Caco-2 (cell line): ENCODE measurements at regions of chr2 and their contacts with region 1.

Region 1: GRCh38 chr2:231621129-231621879 is 28.6 kb downstream of the TEX44 start:
- DNase-seq: peak; percentile 79 to 92
- H3K4me3 ChIP-seq: no peak overlapping the region
- H3K4me3 Mint-ChIP-seq: peak overlapping the region; percentile 58
- H3K27ac Mint-ChIP-seq: peak overlapping the region; percentile 88
- H3K4me1 ChIP-seq: peaks cover 37% of the 10 kb centered on the region
- H3K4me1 Mint-ChIP-seq: peaks cover 30% of the 10 kb centered on the region
- H3K27me3 ChIP-seq: no peaks in the 10 kb centered on the region
- H3K27me3 Mint-ChIP-seq: no peaks in the 10 kb centered on the region
- CTCF ChIP-seq: no peak

Region 2: DNA sequence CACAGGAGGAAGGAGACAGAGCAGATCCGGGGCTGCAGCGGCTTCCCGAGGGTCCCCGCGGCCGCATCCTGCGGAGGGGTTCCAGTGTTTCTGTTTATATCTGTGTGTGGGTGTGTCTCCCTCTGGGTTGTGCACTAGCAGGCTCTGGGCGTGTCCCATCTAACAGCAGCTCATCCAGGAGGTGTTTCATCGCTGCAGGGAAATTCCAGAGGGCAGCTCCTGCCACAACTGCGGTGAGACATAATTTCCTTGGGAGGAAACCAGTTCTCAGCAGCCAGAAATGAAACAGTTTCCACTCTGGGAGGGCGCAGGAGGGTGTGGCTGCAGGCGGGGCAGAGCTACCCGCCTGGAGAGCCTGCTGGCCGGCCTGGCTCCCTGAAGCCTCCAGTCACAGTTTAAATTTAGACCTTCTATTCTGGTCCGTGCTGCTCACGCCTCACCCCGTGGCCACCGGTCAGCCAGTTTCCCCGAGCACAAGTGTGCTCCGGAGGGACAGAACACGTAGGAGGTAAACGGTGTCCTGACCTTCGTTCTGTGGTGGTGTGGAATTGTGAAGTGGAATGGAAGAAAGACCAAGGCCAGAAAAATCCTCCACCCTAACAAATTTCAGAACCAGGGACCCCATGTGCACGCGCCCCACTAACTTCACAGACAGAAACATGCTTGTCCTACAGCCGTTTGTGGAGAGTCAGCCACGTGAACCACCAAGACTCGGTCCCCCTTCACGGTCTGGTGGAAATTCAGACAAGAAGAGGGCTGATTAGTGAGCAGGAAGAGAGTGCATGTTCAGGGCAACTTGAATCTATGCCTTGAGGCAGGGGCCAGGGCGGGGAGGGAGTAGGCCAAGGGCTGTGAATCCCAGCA is 21.6 kb after region 1 on chr2:
- CTCF ChIA-PET with region 1: interaction called, 4 read pairs
- POLR2A ChIA-PET with region 1: interaction called, 3 read pairs
- intact Hi-C with region 1: loop called (anchors 2 kb)
- DNase-seq: peak; percentile 77 to 89
- H3K4me3 ChIP-seq: no peak overlapping the region
- H3K4me3 Mint-ChIP-seq: peak overlapping the region; percentile 66
- H3K27ac Mint-ChIP-seq: peak overlapping the region; percentile 92
- H3K4me1 ChIP-seq: peaks cover 8% of the 10 kb centered on the region
- H3K4me1 Mint-ChIP-seq: peaks cover 6% of the 10 kb centered on the region
- H3K27me3 ChIP-seq: no peaks in the 10 kb centered on the region
- H3K27me3 Mint-ChIP-seq: no peaks in the 10 kb centered on the region
- CTCF ChIP-seq: no peak